ENCODE measurements at regions of chr1 and their contacts with region 1.

Region 1: DNA sequence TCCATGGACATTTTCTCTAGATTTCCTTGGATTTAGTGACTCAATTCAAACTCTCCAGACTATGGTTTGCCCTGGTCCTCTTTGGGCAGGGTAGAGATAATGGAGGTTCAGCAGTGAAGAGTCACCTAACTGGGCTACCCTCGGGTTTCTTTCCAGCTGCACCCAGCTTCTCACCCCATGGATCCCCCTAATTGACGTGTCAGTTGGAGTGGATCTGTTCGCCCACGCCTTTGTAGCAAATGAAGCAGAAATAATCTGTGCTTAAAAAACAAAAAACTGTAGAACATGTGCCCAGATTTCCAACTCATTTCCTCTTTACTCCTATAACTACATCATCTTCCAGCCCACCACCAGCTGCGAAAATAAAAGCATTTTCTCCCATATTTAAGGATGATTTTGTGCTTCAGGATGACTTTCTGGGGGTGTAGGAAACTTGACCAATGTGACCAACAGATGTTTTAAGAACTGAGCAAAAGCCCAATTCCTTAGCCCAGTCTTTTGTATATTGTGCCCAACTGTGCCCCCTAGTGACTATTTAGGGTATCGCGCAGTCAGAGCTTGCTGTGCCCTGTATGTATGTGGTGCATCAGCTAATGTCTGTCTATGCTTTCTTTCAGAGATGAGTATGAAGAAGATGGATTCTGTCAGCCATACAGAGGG is 66.5 kb upstream of the UBE2U start:
- DNase-seq: peak; percentile 57
- H3K4me3 ChIP-seq: peak overlapping the region in 1 of 2 experiments; percentile 16; a peak in 1 of 4 replicates
- H3K27ac ChIP-seq: peak overlapping the region; percentile 43 to 61; a peak in 3 of 4 replicates
- H3K4me1 ChIP-seq: peaks cover 13 to 24% of the 10 kb centered on the region in 2 experiments
- H3K27me3 ChIP-seq: no peaks in the 10 kb centered on the region
- CTCF ChIP-seq: peak; percentile 97
- EP300 ChIP-seq: no peak
- RAD21 ChIP-seq: peak; percentile 95

Region 2: GRCh38 chr1:63674238-63674864 is 462.5 kb before region 1 on chr1:
- CTCF ChIA-PET with region 1: interaction called, 32 read pairs
- POLR2A ChIA-PET with region 1: no interaction called
- DNase-seq: peak; percentile 72
- H3K4me3 ChIP-seq: peak overlapping the region in 1 of 2 experiments; percentile 6; a peak in 1 of 4 replicates
- H3K27ac ChIP-seq: peak overlapping the region in 1 of 2 experiments; percentile 76; a peak in 2 of 4 replicates
- H3K4me1 ChIP-seq: peaks cover 0 to 17% of the 10 kb centered on the region in 2 experiments; a peak in 2 of 4 replicates
- H3K27me3 ChIP-seq: no peaks in the 10 kb centered on the region
- CTCF ChIP-seq: peak; percentile 77
- EP300 ChIP-seq: no peak
- RAD21 ChIP-seq: peak; percentile 89

Region 3: GRCh38 chr1:63920154-63921117 is 216.4 kb before region 1 on chr1:
- CTCF ChIA-PET with region 1: interaction called, 16 read pairs
- POLR2A ChIA-PET with region 1: no interaction called
- DNase-seq: no peak
- H3K4me3 ChIP-seq: no peak overlapping the region
- H3K27ac ChIP-seq: peak overlapping the region; percentile 54 to 87
- H3K4me1 ChIP-seq: peaks cover 4 to 27% of the 10 kb centered on the region in 2 experiments; a peak in 3 of 4 replicates
- H3K27me3 ChIP-seq: no peaks in the 10 kb centered on the region
- CTCF ChIP-seq: peak; percentile 61
- EP300 ChIP-seq: peak; percentile 77 to 99
- RAD21 ChIP-seq: peak; percentile 31; the same call in 1 of the 2 replicates

Region 4: GRCh38 chr1:64112281-64112680 is 24.6 kb before region 1 on chr1:
- CTCF ChIA-PET with region 1: interaction called, 17 read pairs
- POLR2A ChIA-PET with region 1: no interaction called
- DNase-seq: no peak
- H3K4me3 ChIP-seq: no peak overlapping the region
- H3K27ac ChIP-seq: peak overlapping the region; percentile 73 to 96
- H3K4me1 ChIP-seq: peaks cover 25% of the 10 kb centered on the region in 2 experiments
- H3K27me3 ChIP-seq: no peaks in the 10 kb centered on the region
- CTCF ChIP-seq: no peak
- EP300 ChIP-seq: no peak
- RAD21 ChIP-seq: no peak

Region 5: DNA sequence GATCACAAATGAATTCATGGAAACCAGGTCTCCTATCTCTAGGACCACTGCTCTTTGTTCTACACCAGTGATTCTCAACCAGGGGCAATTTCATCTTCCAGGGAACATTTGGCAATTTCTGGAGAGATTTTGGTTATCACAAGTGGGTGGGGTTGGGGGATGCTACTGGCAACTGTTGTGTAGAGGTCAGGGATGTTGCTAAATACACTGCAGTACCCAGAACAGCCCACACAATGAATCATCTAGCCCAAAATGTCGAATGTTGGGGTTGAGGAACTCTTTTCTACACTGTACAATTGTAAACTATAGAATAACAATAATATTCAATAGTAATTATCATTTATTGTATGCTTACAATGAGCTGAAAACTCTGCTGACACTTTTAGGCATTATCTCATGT is 10.9 kb after region 1 on chr1:
- CTCF ChIA-PET with region 1: interaction called, 32 read pairs
- POLR2A ChIA-PET with region 1: interaction called, 3 read pairs
- DNase-seq: no peak
- H3K4me3 ChIP-seq: no peak overlapping the region
- H3K27ac ChIP-seq: no peak overlapping the region; a peak in 1 of 4 replicates
- H3K4me1 ChIP-seq: peaks cover 0 to 2% of the 10 kb centered on the region in 2 experiments; a peak in 1 of 4 replicates
- H3K27me3 ChIP-seq: no peaks in the 10 kb centered on the region
- CTCF ChIP-seq: no peak
- EP300 ChIP-seq: no peak
- RAD21 ChIP-seq: no peak

Region 6: GRCh38 chr1:64171797-64172281 is 35.0 kb after region 1 on chr1:
- CTCF ChIA-PET with region 1: interaction called, 49 read pairs
- POLR2A ChIA-PET with region 1: no interaction called
- DNase-seq: no peak
- H3K4me3 ChIP-seq: peak overlapping the region in 1 of 2 experiments; percentile 14; a peak in 3 of 4 replicates
- H3K27ac ChIP-seq: peak overlapping the region; percentile 91 to 100
- H3K4me1 ChIP-seq: peaks cover 33 to 46% of the 10 kb centered on the region in 2 experiments
- H3K27me3 ChIP-seq: no peaks in the 10 kb centered on the region
- CTCF ChIP-seq: no peak
- EP300 ChIP-seq: no peak
- RAD21 ChIP-seq: peak; percentile 33

Region 7: DNA sequence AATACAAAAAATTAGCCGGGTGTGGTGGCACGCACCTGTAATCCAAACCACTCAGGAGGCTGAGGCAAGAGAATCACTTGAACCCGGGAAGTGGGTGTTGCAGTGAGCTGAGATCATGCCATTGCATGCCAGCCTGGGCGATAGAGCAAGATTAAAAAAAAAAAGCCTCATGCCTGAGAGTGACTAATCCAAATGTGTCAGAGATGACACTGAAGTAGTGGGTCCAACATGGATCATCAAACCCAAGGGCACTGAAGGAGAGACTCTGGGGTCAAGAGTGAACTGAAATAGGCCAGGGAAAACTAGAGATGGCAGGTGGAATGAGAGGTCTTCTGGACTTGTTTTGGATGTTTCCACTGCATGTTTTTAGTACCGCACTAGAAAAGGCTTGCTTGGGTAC is 322.9 kb after region 1 on chr1:
- CTCF ChIA-PET with region 1: no interaction called
- POLR2A ChIA-PET with region 1: no interaction called
- DNase-seq: no peak
- H3K4me3 ChIP-seq: no peak overlapping the region
- H3K27ac ChIP-seq: no peak overlapping the region
- H3K4me1 ChIP-seq: no peaks in the 10 kb centered on the region
- H3K27me3 ChIP-seq: no peaks in the 10 kb centered on the region
- CTCF ChIP-seq: no peak
- EP300 ChIP-seq: no peak
- RAD21 ChIP-seq: no peak

Measured in SK-N-SH (cell line).